AG04450 (cell line): ENCODE measurements at regions of chr2 and their contacts with region 1.

Region 1: GRCh38 chr2:33395655-33396249 is 80.7 kb upstream of the RASGRP3 start:
- DNase-seq: no peak
- H3K4me3 ChIP-seq: no peak overlapping the region
- H3K27ac ChIP-seq: no peak overlapping the region
- H3K27me3 ChIP-seq: no peaks in the 10 kb centered on the region
- CTCF ChIP-seq: peak; percentile 76

Region 2: GRCh38 chr2:33380001-33380609 is 15.6 kb before region 1 on chr2:
- CTCF ChIA-PET with region 1: interaction called, 19 read pairs
- POLR2A ChIA-PET with region 1: no interaction called
- DNase-seq: no peak
- H3K4me3 ChIP-seq: no peak overlapping the region
- H3K27ac ChIP-seq: no peak overlapping the region
- H3K27me3 ChIP-seq: no peaks in the 10 kb centered on the region
- CTCF ChIP-seq: peak; percentile 68

Region 3: DNA sequence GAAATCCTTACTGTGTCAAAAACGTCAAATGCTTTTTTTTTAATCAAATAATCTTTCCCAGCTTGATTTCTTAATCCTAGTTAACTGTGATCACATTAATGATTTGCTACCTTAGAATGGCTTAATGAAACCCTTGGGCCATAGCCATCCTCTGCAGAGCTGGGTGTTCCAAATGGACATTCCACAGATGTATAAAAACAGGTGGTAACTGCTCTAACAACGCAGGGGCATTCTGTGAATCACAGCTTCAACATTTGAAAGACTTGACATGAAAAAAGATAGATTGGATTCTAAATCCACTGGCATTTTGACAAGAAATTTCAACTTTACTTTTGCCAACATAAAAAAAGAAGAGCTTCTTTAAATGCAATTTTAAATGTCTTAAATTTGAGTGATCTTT is 10.9 kb after region 1 on chr2:
- CTCF ChIA-PET with region 1: interaction called, 11 read pairs
- POLR2A ChIA-PET with region 1: no interaction called
- DNase-seq: no peak
- H3K4me3 ChIP-seq: no peak overlapping the region
- H3K27ac ChIP-seq: no peak overlapping the region
- H3K27me3 ChIP-seq: no peaks in the 10 kb centered on the region
- CTCF ChIP-seq: no peak

Region 4: GRCh38 chr2:33426666-33427231 is 31.0 kb after region 1 on chr2:
- CTCF ChIA-PET with region 1: interaction called, 12 read pairs
- POLR2A ChIA-PET with region 1: no interaction called
- DNase-seq: peak; percentile 46
- H3K4me3 ChIP-seq: no peak overlapping the region
- H3K27ac ChIP-seq: peak overlapping the region; percentile 47
- H3K27me3 ChIP-seq: no peaks in the 10 kb centered on the region
- CTCF ChIP-seq: no peak

Region 5: GRCh38 chr2:33441235-33441810 is 45.6 kb after region 1 on chr2:
- CTCF ChIA-PET with region 1: interaction called, 11 read pairs
- POLR2A ChIA-PET with region 1: interaction called, 6 read pairs
- DNase-seq: no peak
- H3K4me3 ChIP-seq: no peak overlapping the region
- H3K27ac ChIP-seq: no peak overlapping the region
- H3K27me3 ChIP-seq: no peaks in the 10 kb centered on the region
- CTCF ChIP-seq: peak; percentile 82